Tibial artery (tissue), 4 donors: ENCODE measurements at regions of chr9 and their contacts with region 1.

Region 1: DNA sequence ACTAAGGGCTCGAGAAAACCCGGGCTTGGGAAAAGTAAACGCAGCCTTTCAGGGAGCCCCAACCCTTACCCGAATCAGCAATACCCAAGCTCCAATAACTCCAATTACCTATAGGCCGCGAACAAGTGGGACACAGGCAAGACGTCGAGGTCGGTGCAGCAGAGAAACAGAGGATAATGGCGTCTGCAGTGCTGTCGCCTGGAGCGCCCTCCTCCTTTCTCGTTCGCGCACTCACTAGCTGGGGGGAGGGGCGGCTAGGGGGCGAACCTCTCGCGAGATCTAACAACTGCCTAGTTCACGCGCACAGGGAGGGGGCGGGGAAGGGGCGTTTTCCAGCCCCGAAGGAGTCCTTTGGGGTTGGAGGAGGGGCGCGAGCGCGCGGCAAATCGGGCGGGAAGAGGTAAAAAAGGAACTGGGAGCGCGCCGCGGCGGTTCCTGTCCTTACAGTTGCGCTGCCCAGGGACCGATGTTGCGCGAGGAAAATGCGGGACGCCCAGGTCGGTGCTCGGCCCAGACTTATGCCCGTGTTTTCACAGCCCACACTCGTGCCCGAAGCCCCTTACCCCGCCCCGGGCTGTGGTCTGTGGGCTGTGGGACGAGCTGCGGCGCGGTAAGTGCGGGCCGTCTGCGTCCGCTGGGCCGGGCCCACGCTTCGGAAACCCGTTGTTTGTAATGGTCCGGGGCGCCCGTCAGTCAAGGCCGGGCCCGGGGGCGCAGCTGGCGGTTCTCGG is at the start of gene RMI1:
- DNase-seq: peak; percentile 99
- H3K4me3 ChIP-seq: peak within 1 kb of the TSS; percentile 90
- H3K27ac ChIP-seq: peak within 1 kb of the TSS; percentile 98 to 99
- H3K4me1 ChIP-seq: peaks cover 0 to 38% (median 16%) of the 10 kb centered on the region in 4 donors
- H3K27me3 ChIP-seq: no peaks in the 10 kb centered on the region
- CTCF ChIP-seq: peak in 1 of 2 experiments; percentile 10

Region 2: DNA sequence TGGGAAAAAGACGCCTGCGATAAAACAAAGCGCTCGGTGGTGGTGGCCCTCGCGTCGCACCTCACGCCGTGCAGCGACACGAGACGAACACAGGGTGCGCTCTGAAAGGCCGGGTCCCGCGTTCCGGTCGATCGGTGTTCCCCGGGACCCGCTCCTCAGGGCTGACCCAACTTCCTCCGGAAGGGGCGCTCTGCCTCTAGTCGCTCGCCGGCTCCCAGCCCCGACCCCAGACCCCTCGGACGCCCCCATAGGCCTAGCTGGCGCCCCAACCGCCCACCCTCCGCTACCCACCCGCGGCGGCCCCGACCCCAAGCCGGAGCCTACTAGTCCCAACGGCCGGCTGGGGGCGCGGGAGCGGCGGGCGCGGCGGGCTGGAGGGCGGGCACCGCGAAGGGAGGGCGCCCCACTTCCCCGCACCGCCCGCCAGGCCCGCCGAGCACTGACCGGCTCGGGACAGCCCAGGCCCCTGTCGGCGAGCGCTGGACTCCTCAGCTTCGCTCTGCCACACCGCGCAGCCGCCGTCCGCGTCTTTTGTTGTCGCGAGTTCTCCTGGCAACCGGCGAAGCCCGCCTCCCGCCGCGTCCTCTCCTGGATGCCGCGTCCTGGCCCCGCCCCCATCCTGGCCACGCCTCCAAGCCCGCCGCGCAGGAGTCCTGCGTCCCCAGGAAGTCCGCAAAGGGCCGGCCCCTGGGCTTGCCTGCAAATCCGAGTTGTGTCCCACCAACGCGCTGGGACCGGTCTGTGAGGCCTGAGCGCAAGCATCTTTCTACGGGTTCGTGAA is 59.4 kb before region 1 on chr9 and contains the start of gene KIF27:
- intact Hi-C with region 1: loop called (anchors 5 kb)
- DNase-seq: peak; percentile 99
- H3K4me3 ChIP-seq: peak within 1 kb of the TSS; percentile 86 to 99
- H3K27ac ChIP-seq: peak within 1 kb of the TSS; percentile 92 to 100
- H3K4me1 ChIP-seq: peaks cover 0 to 11% (median 6%) of the 10 kb centered on the region in 4 donors
- H3K27me3 ChIP-seq: no peaks in the 10 kb centered on the region
- CTCF ChIP-seq: peak; percentile 46 to 60

Region 3: GRCh38 chr9:83937911-83938323 is 42.6 kb before region 1 on chr9:
- intact Hi-C with region 1: no loop called
- DNase-seq: no peak
- H3K4me3 ChIP-seq: no peak overlapping the region
- H3K27ac ChIP-seq: no peak overlapping the region
- H3K4me1 ChIP-seq: no peaks in the 10 kb centered on the region
- H3K27me3 ChIP-seq: no peaks in the 10 kb centered on the region
- CTCF ChIP-seq: peak; percentile 68 to 71

Region 4: DNA sequence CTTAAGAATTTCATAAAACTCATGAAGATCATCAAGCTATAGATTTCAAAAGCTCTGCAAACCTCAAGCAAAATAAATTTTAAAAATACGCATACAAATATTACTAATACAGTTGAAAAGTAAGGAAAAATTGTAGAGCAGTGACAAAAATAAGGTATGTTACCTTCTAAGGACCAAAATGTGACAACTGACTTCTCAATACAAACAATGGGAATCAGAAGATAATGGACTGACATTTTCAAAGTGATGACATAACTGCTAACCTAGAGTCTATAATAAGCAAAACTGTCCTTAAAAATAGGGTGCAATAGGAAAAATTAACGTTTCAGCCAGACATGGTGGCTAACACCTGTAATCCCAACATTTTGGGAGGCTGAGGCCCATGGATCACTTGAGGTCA is 27.1 kb after region 1 on chr9:
- intact Hi-C with region 1: no loop called
- DNase-seq: no peak
- H3K4me3 ChIP-seq: no peak overlapping the region
- H3K27ac ChIP-seq: no peak overlapping the region
- H3K4me1 ChIP-seq: no peaks in the 10 kb centered on the region
- H3K27me3 ChIP-seq: no peaks in the 10 kb centered on the region
- CTCF ChIP-seq: no peak

Region 5: GRCh38 chr9:84170521-84171141 is 190.1 kb after region 1 on chr9:
- intact Hi-C with region 1: loop called (anchors 10 kb)
- DNase-seq: peak; percentile 60 to 84
- H3K4me3 ChIP-seq: no peak overlapping the region
- H3K27ac ChIP-seq: peak overlapping the region; percentile 56 to 59
- H3K4me1 ChIP-seq: peaks cover 0 to 15% (median 8%) of the 10 kb centered on the region in 4 donors
- H3K27me3 ChIP-seq: no peaks in the 10 kb centered on the region
- CTCF ChIP-seq: peak in 1 of 2 experiments; percentile 25

Region 6: GRCh38 chr9:84331119-84331809 is 350.7 kb after region 1 on chr9:
- intact Hi-C with region 1: no loop called
- DNase-seq: no peak
- H3K4me3 ChIP-seq: no peak overlapping the region
- H3K27ac ChIP-seq: no peak overlapping the region
- H3K4me1 ChIP-seq: no peaks in the 10 kb centered on the region
- H3K27me3 ChIP-seq: no peaks in the 10 kb centered on the region
- CTCF ChIP-seq: no peak